AG04450 (cell line): ENCODE measurements at regions of chr9 and their contacts with region 1.

Region 1: GRCh38 chr9:120477521-120478001 is 102.4 kb downstream of the CDK5RAP2 start:
- DNase-seq: peak; percentile 83
- H3K4me3 ChIP-seq: no peak overlapping the region
- H3K27ac ChIP-seq: no peak overlapping the region
- H3K27me3 ChIP-seq: no peaks in the 10 kb centered on the region
- CTCF ChIP-seq: peak; percentile 100

Region 2: GRCh38 chr9:119961774-119962424 is 515.7 kb before region 1 on chr9:
- CTCF ChIA-PET with region 1: interaction called, 37 read pairs
- POLR2A ChIA-PET with region 1: interaction called, 4 read pairs
- DNase-seq: no peak
- H3K4me3 ChIP-seq: no peak overlapping the region
- H3K27ac ChIP-seq: no peak overlapping the region
- H3K27me3 ChIP-seq: no peaks in the 10 kb centered on the region
- CTCF ChIP-seq: peak; percentile 85

Region 3: DNA sequence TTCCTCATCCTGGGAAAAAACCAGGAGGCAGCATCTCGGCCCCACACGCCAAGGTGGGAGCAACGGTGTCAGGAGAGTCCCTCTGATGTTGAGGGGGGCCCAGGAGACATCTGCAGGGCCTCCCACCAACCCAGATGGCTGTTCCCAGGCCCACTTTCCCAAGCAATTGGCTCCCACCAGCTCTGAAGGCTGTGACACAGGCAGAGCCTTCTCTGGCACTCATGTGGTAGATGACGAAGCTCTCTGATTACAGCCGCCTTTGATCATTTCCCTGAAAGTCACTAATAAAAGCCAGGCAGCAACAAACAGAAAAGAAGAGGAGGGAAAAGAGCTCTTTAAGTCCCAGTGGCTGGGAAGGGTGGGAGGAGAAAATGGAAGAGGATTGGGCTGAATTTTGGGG is 124.1 kb before region 1 on chr9:
- CTCF ChIA-PET with region 1: interaction called, 22 read pairs
- POLR2A ChIA-PET with region 1: no interaction called
- DNase-seq: peak; percentile 10
- H3K4me3 ChIP-seq: no peak overlapping the region
- H3K27ac ChIP-seq: peak overlapping the region; percentile 11
- H3K27me3 ChIP-seq: no peaks in the 10 kb centered on the region
- CTCF ChIP-seq: no peak

Region 4: DNA sequence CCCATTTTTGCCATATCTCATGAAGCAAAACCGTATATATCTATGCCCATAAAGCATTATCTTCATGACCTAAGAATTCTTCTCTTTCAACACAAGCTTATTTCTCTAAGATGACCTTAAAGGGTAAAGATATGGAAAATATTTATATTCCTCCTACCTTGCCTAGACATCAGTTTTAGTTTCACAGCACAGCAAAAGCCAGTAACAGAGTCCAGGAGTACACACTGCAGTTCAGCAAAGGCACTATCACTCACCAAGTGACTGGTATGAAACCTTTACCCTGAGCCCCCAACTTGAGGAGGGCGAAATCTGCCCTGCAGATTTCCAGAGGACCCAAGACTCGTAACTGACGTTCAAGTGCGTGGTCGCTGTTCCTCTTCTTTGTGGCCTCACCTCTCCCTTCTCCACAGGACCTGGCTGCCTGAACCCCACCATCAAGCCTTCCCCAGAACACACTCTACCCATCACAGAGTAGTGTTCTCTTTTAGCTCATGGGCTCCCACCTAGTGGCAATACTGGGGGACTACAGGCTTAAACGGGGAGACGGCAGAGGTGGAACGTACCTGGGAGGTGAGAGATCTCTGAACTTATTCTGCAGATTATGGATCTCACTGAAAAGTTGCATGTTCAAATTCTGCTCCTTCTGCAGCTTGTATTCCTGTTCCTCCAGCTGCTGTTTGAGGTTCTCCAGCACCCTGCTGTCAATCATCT is 38.6 kb before region 1 on chr9:
- CTCF ChIA-PET with region 1: interaction called, 27 read pairs
- POLR2A ChIA-PET with region 1: interaction called, 4 read pairs
- DNase-seq: no peak
- H3K4me3 ChIP-seq: no peak overlapping the region
- H3K27ac ChIP-seq: no peak overlapping the region
- H3K27me3 ChIP-seq: no peaks in the 10 kb centered on the region
- CTCF ChIP-seq: peak; percentile 57

Region 5: GRCh38 chr9:120464176-120464886 is 13.2 kb before region 1 on chr9:
- CTCF ChIA-PET with region 1: interaction called, 19 read pairs
- POLR2A ChIA-PET with region 1: no interaction called
- DNase-seq: no peak
- H3K4me3 ChIP-seq: no peak overlapping the region
- H3K27ac ChIP-seq: no peak overlapping the region
- H3K27me3 ChIP-seq: no peaks in the 10 kb centered on the region
- CTCF ChIP-seq: no peak

Region 6: GRCh38 chr9:120792898-120793765 is 315.6 kb after region 1 on chr9 and contains the start of gene FBXW2:
- CTCF ChIA-PET with region 1: no interaction called
- POLR2A ChIA-PET with region 1: no interaction called
- DNase-seq: peak; percentile 66
- H3K4me3 ChIP-seq: peak within 1 kb of the TSS; percentile 92
- H3K27ac ChIP-seq: peak within 1 kb of the TSS; percentile 23
- H3K27me3 ChIP-seq: no peaks in the 10 kb centered on the region
- CTCF ChIP-seq: no peak
- polyA plus RNA-seq, gene FBXW2: 57.7 and 69.0 TPM in 2 replicates